ENCODE measurements at regions of chr2 and their contacts with region 1.

Region 1: DNA sequence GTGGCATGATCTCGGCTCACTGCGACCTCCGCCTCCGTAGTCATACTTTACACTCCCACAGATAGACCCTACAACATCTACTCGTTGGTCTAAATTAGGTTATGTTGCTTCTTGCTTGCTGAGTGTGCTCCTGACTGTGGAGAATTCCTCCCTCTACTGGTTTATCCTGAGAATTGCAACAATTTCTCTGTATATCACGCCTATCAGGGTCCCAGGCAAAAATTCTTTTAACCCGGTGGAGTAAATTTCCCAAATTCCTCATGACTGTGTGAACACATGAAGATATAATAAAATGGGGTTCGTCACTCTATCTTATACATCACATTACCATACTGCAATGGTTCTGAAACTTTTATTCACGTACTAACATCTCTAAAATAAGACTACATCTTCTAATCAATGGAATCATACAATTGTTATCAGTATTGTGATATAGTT is 156.7 kb downstream of the EVA1A start:
- DNase-seq: no peak
- H3K4me3 ChIP-seq: no peak overlapping the region
- CTCF ChIP-seq: peak; percentile 70

Region 2: DNA sequence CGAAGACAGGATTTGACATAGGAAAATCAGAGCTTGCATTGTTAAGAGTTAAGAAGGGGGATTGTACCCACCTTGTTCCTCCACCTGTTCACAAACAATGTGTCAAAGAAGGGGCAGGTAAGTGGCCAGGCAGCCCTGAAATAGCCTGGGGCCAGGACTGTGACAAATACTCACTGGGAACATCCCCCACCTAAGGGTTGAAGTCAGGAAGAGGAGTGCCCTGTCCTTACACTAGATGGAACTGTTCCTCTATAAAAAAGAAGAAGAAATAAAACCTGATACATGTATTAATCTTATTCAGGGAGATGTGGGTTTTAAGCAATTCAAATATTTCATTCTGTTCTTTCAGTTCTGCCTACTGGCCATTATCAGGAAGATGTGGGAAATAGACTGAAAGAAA is 246.6 kb before region 1 on chr2:
- CTCF ChIA-PET with region 1: interaction called, 14 read pairs
- POLR2A ChIA-PET with region 1: no interaction called
- DNase-seq: no peak
- H3K4me3 ChIP-seq: no peak overlapping the region
- CTCF ChIP-seq: peak; percentile 6

Region 3: GRCh38 chr2:75416420-75417342 is 12.7 kb after region 1 on chr2:
- CTCF ChIA-PET with region 1: interaction called, 15 read pairs
- POLR2A ChIA-PET with region 1: no interaction called
- DNase-seq: no peak
- H3K4me3 ChIP-seq: no peak overlapping the region
- CTCF ChIP-seq: no peak